Activated CD4-positive, alpha-beta T cell treated with anti-CD3 and anti-CD28 coated beads for 36 hours (primary cell): ENCODE measurements at regions of chr6 and their contacts with region 1.

Region 1: GRCh38 chr6:36759148-36759759 is 61.6 kb downstream of the RAB44 start:
- DNase-seq: peak; percentile 91
- ATAC-seq: peak; percentile 33
- H3K4me3 Mint-ChIP-seq: no peak overlapping the region
- H3K27ac Mint-ChIP-seq: no peak overlapping the region
- H3K4me1 Mint-ChIP-seq: peaks cover 43% of the 10 kb centered on the region
- H3K27me3 Mint-ChIP-seq: peaks cover 3% of the 10 kb centered on the region

Region 2: GRCh38 chr6:36423101-36423824 is 336.0 kb before region 1 on chr6:
- CTCF ChIA-PET with region 1: interaction called, 9 read pairs
- POLR2A ChIA-PET with region 1: no interaction called
- intact Hi-C with region 1: loop called (anchors 1 to 5 kb)
- DNase-seq: peak; percentile 99
- ATAC-seq: peak; percentile 97
- H3K4me3 Mint-ChIP-seq: peak overlapping the region; percentile 83
- H3K27ac Mint-ChIP-seq: peak overlapping the region; percentile 92
- H3K4me1 Mint-ChIP-seq: peaks cover 17% of the 10 kb centered on the region
- H3K27me3 Mint-ChIP-seq: no peaks in the 10 kb centered on the region

Region 3: DNA sequence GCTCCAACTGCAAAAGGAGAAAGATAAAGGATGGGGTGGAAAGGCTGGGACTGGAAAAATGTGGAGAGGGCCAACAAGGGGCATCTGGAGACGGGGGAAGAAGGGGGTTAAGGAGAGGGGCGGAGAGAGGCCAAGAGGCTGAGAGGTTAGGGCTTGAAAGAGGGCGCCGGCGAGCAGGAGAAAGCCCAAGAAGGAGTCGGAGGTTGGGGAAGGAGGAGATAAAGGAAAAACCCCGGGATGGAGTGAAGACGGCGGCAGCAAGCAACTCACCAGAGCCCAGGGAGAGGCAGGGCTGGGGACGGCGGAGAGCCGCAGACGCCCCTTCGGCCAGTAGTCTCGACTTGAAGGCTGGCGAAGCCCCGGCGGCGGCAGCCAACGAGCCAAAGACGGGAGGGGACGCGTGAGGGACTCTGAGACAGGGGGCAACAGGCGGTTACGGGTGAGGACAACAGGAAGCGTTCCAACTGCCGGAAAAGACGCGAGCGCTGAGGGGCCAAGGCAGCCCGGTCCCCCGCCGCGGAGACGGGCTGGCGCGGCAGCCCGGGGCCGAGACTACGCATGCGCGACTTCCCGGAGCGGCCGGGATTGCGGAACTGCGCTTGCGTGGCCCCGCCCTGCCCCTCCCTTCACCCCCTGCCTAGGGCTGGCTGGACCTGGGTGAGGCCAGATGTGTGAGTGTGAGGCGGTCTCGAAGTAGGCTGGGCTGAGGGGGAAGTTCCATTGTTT is 212.2 kb before region 1 on chr6 and contains the start of gene STK38:
- CTCF ChIA-PET with region 1: interaction called, 3 read pairs
- POLR2A ChIA-PET with region 1: no interaction called
- intact Hi-C with region 1: loop called in 1 of 2 experiments (anchors 5 kb)
- DNase-seq: peak; percentile 97
- ATAC-seq: peak; percentile 90
- H3K4me3 Mint-ChIP-seq: peak within 1 kb of the TSS; percentile 94
- H3K27ac Mint-ChIP-seq: peak within 1 kb of the TSS; percentile 97
- H3K4me1 Mint-ChIP-seq: peaks cover 36% of the 10 kb centered on the region
- H3K27me3 Mint-ChIP-seq: no peaks in the 10 kb centered on the region
- total RNA-seq, gene STK38: 24.0 to 27.0 TPM

Region 4: DNA sequence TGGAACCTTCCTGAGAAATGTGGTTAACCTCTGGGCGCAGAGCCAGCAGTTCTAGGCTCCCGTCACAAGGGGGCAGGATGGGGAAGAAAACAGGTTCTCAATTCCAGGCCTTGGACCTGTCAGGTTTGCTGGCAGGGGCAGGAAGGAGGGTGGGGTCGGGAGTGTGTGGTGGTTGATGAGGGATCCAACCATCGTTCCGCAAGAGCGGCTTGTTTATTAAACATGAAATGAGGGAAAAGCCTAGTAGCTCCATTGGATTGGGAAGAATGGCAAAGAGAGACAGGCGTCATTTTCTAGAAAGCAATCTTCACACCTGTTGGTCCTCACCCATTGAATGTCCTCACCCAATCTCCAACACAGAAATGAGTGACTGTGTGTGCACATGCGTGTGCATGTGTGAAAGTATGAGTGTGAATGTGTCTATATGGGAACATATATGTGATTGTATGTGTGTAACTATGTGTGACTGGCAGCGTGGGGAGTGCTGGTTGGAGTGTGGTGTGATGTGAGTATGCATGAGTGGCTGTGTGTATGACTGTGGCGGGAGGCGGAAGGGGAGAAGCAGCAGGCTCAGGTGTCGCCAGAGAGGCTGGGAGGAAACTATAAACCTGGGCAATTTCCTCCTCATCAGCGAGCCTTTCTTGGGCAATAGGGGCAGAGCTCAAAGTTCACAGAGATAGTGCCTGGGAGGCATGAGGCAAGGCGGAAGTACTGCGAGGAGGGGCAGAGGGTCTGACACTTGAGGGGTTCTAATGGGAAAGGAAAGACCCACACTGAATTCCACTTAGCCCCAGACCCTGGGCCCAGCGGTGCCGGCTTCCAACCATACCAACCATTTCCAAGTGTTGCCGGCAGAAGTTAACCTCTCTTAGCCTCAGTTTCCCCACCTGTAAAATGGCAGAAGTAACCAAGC is 135.5 kb before region 1 on chr6:
- CTCF ChIA-PET with region 1: interaction called, 31 read pairs
- POLR2A ChIA-PET with region 1: no interaction called
- intact Hi-C with region 1: loop called (anchors 1 to 2 kb)
- DNase-seq: peak; percentile 86
- ATAC-seq: peak; percentile 82
- H3K4me3 Mint-ChIP-seq: no peak overlapping the region
- H3K27ac Mint-ChIP-seq: peak overlapping the region; percentile 45
- H3K4me1 Mint-ChIP-seq: peaks cover 18% of the 10 kb centered on the region
- H3K27me3 Mint-ChIP-seq: no peaks in the 10 kb centered on the region

Region 5: DNA sequence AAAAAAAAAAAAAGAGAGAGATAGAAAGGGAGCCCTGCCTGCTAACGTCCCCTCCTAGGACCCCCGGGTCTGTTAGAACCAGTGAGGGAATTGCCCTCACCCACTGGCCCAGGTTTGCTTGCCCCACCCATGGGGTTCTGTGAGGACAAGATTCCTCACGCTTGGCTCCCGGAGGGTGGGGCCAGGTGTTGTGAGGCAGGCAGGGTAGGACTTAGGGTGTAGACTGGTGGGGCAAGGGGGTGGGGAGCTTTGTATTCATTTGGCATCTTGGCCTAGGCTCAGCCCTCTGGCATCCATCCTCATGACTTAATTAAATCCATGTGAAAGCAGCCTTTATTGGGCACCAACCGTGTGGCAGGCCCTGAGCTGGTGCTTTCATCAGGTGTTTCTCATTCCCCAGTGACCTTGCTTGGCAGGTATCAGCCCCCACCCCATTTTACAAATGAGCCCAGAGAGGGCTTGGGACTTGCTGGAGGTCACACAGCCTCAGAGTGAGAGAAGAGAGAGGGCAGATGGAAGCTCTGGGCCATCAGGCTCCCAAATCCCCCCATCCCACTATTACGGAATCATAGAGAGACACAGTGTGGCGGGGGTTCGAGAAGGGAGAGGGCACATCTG is 42.7 kb before region 1 on chr6:
- CTCF ChIA-PET with region 1: interaction called, 11 read pairs
- POLR2A ChIA-PET with region 1: no interaction called
- intact Hi-C with region 1: no loop called
- DNase-seq: no peak
- ATAC-seq: no peak
- H3K4me3 Mint-ChIP-seq: no peak overlapping the region
- H3K27ac Mint-ChIP-seq: no peak overlapping the region
- H3K4me1 Mint-ChIP-seq: peaks cover 2% of the 10 kb centered on the region
- H3K27me3 Mint-ChIP-seq: no peaks in the 10 kb centered on the region

Region 6: DNA sequence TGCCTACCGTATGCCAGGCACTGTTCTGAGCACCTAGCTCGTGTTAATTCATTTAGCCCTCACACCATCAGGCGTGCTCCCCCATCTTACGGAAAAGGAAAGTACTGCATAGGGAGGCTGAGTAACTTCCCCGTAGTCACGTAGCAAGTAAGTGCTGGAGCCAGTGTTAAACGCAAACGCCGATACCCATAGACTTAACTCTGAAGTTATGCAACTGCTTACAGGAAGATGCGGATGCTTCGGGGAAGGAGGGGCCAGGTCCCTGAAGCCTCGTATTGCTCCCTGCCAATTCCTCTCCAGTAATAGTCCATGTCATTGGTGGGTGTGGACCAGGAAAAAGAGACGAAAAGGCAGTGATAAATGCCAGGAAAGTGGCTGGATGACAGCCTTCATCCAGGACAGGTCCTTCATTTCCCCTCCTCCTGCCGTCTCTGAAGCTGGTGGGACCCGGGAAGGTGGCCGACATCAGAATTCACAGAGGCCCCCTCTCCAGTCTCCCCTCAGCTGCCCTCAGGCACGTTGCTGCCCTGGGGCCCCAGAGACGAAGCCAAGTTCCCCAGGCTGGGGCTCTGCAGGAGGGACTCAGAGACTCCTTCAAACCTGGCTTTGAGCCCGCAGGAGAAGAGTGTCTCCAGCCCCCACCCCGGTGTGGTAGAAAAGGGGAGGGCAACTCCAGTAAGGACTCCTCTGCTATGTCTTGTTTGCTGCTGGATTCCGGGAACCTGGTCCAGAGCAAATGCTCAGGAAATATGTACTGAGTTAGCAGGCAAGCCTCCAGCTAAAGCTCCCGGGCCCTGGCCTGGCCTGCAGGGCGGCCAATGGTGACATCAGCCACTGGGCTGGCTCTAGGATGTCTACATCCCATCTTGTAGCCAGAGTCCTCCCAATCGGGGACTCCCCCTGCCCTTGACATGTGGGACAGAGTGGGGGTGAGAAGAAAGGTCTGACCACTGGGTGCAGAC is 23.9 kb before region 1 on chr6:
- CTCF ChIA-PET with region 1: interaction called, 8 read pairs
- POLR2A ChIA-PET with region 1: no interaction called
- intact Hi-C with region 1: loop called (anchors 1 to 2 kb)
- DNase-seq: peak; percentile 74
- ATAC-seq: peak; percentile 98
- H3K4me3 Mint-ChIP-seq: peak overlapping the region; percentile 55
- H3K27ac Mint-ChIP-seq: peak overlapping the region; percentile 88
- H3K4me1 Mint-ChIP-seq: peaks cover 21% of the 10 kb centered on the region
- H3K27me3 Mint-ChIP-seq: peaks cover 2% of the 10 kb centered on the region